Heart left ventricle (tissue), 16 donors: ENCODE measurements at regions of chr6 and their contacts with region 1.

Region 1: GRCh38 chr6:15608396-15608795 is 54.4 kb downstream of the DTNBP1 start:
- DNase-seq: peak in 2 of 5 donors; percentile 32 to 48
- ATAC-seq: peak in 3 of 4 donors; percentile 85 to 97 (median 85)
- H3K4me3 ChIP-seq: no peak overlapping the region
- H3K27ac ChIP-seq: peak overlapping the region in 10 of 12 donors; percentile 6 to 66 (median 40)
- H3K4me1 ChIP-seq: peaks cover 0 to 36% (median 0%) of the 10 kb centered on the region in 12 donors
- H3K27me3 ChIP-seq: no peaks in the 10 kb centered on the region
- CTCF ChIP-seq: no peak
- POLR2A ChIP-seq: no peak

Region 2: DNA sequence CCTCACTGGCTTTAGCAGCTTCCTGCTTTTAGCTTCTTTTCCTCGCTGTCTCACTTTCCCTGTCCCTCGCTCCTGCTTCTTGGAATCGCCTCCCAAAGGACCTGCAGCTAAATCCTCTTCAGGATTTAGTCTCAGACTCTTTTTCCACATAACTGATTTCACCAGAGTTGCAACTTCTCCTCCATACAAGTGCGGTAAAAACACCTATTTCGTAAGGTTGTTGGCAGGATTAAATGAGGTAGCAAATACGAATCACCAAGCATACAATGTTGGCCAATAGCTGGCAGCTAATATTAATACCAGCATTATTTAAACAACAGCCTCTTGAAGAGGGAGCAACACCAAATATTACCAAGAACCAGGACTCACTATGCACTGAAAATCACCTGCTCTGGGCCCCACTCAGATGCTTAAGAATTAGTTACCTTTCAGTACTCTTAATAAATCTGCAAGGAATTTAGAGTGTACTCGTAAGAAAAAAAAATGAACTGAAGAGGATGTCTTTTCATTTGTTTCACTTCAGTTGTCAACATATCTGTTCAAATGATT is 68.6 kb before region 1 on chr6:
- intact Hi-C with region 1: loop called in 1 of 10 experiments (anchors 5 kb)
- DNase-seq: no peak
- ATAC-seq: no peak
- H3K4me3 ChIP-seq: no peak overlapping the region
- H3K27ac ChIP-seq: no peak overlapping the region
- H3K4me1 ChIP-seq: peaks cover 0 to 39% (median 11%) of the 10 kb centered on the region in 12 donors
- H3K27me3 ChIP-seq: no peaks in the 10 kb centered on the region
- CTCF ChIP-seq: no peak
- POLR2A ChIP-seq: no peak

Region 3: DNA sequence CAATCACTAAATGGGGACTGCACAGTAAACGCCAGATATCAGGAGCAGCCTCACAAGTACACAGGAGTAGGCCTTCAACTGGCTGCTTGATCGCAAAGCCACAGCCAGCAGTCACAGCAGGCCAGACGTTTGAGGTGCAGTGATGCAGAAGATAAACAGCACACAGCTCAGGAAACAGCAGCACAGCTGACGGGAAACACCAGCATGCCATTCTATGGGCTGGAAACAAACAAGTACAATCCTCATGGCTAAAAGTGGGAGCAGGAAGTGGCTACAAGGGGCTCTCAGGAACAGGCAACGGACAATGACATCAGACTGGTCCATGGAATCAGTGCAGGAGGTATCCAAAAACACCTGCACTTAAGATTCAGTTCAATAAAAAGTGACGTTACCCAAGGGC is 56.6 kb before region 1 on chr6:
- intact Hi-C with region 1: no loop called
- DNase-seq: peak in 3 of 5 donors; percentile 18 to 29 (median 28)
- ATAC-seq: peak; percentile 47 to 81 (median 61)
- H3K4me3 ChIP-seq: no peak overlapping the region
- H3K27ac ChIP-seq: peak overlapping the region in 6 of 12 donors; percentile 10 to 43 (median 38)
- H3K4me1 ChIP-seq: peaks cover 0 to 64% (median 25%) of the 10 kb centered on the region in 12 donors
- H3K27me3 ChIP-seq: no peaks in the 10 kb centered on the region
- CTCF ChIP-seq: no peak
- POLR2A ChIP-seq: no peak

Region 4: DNA sequence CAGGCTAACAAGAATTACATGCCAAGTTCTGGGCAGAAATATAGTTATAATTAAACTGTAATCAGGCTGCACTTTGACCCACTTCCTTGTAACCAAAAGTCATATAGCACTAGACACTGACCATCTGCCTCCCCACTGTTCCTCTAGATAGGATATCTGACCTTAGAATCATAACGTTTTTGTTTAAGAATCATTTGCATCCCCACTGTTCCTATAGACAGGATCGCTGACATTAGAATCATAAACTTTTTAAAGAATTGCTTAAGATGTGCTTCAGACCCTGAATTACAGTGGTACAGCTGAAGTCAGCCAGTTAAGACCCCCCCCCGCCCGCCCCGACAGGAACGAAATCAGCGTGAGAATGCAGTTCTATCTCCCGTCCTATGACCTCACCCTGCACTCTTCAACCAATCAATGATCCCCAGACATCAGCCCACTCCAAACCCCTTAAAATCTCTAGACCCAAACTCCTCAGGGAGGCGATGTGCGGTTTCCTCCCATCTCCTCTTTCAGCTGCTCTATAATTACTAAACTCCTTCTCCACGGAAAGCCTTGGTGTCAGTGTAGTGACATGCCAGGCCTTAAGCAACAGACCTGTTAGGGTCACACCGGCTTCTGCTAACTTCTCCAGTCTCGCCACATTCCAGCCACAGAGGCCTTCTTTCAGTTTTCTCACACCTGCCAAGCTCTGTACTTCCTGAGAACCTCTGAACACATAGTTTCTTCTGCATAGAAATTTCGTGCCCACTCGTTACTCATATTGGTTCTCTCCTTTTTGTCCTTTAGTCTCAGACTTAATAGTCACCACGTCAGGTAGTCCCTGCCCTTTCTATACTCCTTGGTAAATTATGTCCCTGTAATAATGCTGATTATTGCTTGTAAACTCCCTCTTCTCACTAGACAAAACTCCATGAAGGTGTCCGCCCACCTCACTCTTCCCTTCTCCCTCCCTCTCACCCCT is 39.1 kb before region 1 on chr6:
- intact Hi-C with region 1: loop called in 1 of 10 experiments (anchors 2 kb)
- DNase-seq: no peak
- ATAC-seq: peak in 3 of 4 donors; percentile 48 to 83 (median 68)
- H3K4me3 ChIP-seq: no peak overlapping the region
- H3K27ac ChIP-seq: peak overlapping the region in 1 of 12 donors; percentile 24
- H3K4me1 ChIP-seq: peaks cover 0 to 15% (median 7%) of the 10 kb centered on the region in 12 donors
- H3K27me3 ChIP-seq: no peaks in the 10 kb centered on the region
- CTCF ChIP-seq: no peak
- POLR2A ChIP-seq: no peak

Region 5: GRCh38 chr6:15698471-15698870 is 90.1 kb after region 1 on chr6:
- intact Hi-C with region 1: no loop called
- DNase-seq: no peak
- ATAC-seq: no peak
- H3K4me3 ChIP-seq: no peak overlapping the region
- H3K27ac ChIP-seq: no peak overlapping the region
- H3K4me1 ChIP-seq: no peaks in the 10 kb centered on the region
- H3K27me3 ChIP-seq: no peaks in the 10 kb centered on the region
- CTCF ChIP-seq: no peak
- POLR2A ChIP-seq: no peak